ENCODE measurements at regions of chr1 and their contacts with region 1.

Region 1: GRCh38 chr1:168572633-168573032 is 3.8 kb upstream of the XCL1 start:
- DNase-seq: no peak
- ATAC-seq: no peak

Region 2: GRCh38 chr1:168342572-168343280 is 229.9 kb before region 1 on chr1:
- intact Hi-C with region 1: loop called (anchors 2 kb)
- DNase-seq: peak; percentile 90
- ATAC-seq: peak; percentile 98

Region 3: GRCh38 chr1:168439456-168440375 is 132.9 kb before region 1 on chr1:
- intact Hi-C with region 1: loop called (anchors 5 kb)
- DNase-seq: no peak
- ATAC-seq: peak; percentile 87

Measured in Right ventricle myocardium inferior (tissue), 1 donor.